ENCODE measurements at regions of chr19 and their contacts with region 1.

Region 1: DNA sequence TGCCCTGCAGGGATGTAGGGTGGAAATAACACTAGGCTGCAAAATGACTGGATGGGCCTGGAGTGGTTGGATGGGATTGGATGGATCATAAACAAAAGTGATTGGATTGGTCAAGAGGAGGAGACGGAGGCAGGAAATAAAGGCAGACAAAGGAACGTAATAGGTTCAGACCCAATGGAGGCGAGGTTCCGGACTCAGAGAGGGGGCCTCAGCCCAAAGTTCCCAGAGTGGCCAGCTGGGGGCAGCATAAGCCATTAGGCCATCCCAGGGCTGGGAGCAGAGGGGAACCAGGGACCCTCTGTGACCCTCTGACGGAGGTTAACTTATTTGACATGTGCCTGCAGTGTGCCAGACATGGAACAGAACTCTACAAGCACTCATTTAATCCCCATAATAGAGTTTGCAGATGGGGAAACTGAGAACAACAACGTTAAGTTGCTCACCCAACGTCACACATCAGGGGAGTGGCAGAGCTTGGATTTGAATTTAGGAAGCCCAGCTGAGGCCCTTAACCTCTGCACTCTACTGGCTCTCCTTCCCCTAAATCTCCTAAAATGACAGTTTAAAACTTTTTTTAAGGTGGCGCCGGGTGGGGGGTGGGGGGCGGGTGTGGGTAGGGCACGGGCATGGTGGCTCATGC is 15.3 kb upstream of the MAP1S start:
- DNase-seq: no peak
- H3K4me3 ChIP-seq: no peak overlapping the region
- H3K27ac ChIP-seq: no peak overlapping the region
- H3K4me1 ChIP-seq: no peaks in the 10 kb centered on the region
- H3K27me3 ChIP-seq: no peaks in the 10 kb centered on the region
- CTCF ChIP-seq: peak; percentile 59 to 65 (median 63)

Region 2: DNA sequence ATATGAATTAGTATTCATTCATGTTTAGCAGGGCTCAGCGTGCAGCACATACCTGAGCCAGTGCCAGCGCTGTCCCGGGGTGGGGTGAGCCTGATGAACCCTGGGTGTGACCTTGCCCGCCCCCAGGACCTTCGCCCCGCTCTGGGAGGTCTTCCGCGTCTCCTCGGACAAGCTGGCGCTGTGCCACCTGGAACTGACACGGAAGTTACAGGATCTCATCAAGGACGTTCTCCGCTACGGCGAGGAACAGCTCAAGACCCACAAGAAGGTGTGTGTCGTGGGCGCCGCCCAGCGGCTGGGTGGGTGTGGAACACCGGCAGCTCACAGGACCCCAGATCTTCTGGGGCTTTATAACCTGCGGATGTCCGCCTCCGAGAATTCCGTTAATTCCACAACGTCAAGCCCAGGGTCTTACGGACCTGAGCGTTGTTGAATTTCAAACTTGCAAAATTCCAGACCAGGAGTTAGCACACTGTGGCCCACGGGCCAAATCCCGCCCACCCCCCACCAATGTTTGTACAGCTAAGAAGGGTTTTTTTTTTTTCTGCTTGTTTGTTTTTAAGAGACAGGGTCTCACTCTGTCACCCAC is 62.7 kb after region 1 on chr19:
- intact Hi-C with region 1: loop called (anchors 1 kb)
- DNase-seq: peak in 1 of 2 donors; percentile 86
- H3K4me3 ChIP-seq: peak overlapping the region in 1 of 2 donors; percentile 26
- H3K27ac ChIP-seq: no peak overlapping the region
- H3K4me1 ChIP-seq: no peaks in the 10 kb centered on the region
- H3K27me3 ChIP-seq: no peaks in the 10 kb centered on the region
- CTCF ChIP-seq: peak; percentile 66 to 72 (median 69)